ENCODE measurements at regions of chr19 and their contacts with region 1.

Region 1: GRCh38 chr19:55146078-55146704 is 2.8 kb downstream of the TNNT1 start:
- DNase-seq: no peak
- H3K4me3 ChIP-seq: no peak overlapping the region
- H3K27ac ChIP-seq: no peak overlapping the region
- H3K27me3 ChIP-seq: peaks cover 0 to 90% (median 65%) of the 10 kb centered on the region in 45 donors
- CTCF ChIP-seq: no peak

Region 2: DNA sequence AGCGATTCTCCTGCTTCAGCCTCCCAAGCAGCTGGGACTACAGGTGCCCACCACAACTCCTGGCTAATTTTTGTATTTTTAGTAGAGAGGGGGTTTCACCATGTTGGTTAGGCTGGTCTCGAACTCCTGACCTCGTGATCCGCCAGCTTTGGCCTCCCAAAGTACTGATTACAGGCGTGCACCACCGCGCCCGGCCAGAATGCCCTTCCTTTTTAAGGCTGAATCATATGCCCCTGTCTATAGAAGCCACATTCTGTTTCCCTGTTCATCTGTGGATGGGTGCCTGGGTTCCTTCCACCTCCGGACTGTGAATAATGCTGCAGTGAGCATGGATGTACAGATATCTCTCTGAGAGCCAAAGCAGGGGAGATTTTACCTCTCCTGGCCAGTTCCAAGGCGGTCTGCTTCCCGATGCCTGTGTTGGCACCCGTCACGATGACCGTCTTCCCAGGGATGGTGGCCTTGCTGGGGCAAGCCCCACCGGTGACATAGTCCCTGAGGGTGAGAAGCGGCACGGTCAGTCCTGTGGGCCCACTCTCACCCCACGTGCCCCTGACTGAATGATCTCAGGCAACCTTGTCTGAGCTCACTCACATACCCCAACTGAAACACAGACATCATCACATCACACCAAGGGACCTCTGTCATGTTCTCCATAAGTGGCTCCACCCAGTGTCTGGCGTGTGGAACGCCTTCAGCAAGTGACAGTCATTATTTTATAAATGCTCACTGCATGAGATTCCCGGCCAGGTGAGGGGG is 87.2 kb before region 1 on chr19:
- intact Hi-C with region 1: no loop called
- DNase-seq: no peak
- H3K4me3 ChIP-seq: no peak overlapping the region
- H3K27ac ChIP-seq: no peak overlapping the region
- H3K27me3 ChIP-seq: no peaks in the 10 kb centered on the region
- CTCF ChIP-seq: no peak

Region 3: DNA sequence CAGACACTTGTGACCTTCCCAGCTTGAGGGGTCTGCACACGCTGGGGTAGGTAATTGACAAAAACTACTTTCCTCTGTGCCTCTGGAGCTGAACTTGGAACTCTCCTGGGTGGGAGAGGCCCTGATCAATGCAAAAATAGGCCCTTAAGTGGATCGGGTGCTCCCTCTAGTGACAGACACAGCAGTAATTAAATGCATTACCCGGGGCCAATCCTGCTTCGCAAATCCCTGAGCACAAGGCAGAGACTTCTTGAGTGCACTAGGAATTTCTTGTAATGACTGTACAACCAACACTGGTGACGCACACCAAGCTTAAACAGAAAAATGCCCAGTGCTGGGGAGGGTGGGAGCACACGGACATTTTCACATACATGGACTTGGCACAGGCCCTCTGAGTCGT is 272.0 kb after region 1 on chr19:
- intact Hi-C with region 1: loop called (anchors 5 to 10 kb)
- DNase-seq: peak in 7 of 10 donors; percentile 29 to 73 (median 58)
- H3K4me3 ChIP-seq: no peak overlapping the region
- H3K27ac ChIP-seq: peak overlapping the region in 37 of 59 donors; percentile 1 to 100 (median 85)
- H3K27me3 ChIP-seq: peaks cover 0 to 3% (median 0%) of the 10 kb centered on the region in 45 donors
- CTCF ChIP-seq: peak; percentile 32 to 87 (median 73)

Region 4: DNA sequence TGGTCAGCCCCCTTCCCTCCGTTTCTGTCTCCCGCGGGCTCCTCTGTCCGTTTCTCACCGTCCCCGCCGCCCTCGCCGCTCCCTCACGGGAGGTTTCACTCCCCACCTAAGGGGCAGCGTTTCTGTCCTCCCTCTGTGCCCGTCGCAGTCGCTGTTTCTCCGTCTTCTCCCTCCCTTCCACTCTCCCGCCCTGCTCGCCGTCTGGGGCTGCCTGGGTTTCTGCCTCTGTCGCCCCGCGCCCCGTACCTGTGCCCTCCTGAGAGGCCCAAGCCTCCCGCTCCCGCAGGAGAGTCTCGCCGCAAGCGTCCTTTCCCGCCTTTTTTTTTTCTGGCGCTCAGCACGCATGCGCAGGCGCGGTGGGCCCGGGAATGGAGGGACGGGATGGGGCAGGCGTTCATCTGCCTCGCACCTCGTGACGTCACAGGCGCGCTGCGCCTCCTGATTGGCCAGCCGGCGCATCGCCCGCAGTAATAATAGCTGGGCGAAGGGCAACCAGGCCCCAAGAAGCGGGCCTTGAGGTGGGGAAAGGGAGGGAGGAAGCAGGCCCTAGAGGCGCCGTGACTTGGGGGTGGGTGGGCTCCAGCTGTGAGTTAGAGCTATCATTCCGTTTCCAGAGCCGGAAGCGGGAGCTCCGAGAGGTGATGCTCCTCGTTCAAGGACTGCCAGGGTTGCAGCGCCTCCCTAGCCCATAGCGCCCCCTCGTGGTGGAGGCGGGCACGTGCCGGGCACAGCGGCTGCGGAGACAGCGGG is 357.5 kb after region 1 on chr19:
- intact Hi-C with region 1: loop called (anchors 2 kb)
- DNase-seq: peak; percentile 91 to 97 (median 95)
- H3K4me3 ChIP-seq: peak overlapping the region; percentile 35 to 88 (median 61)
- H3K27ac ChIP-seq: peak overlapping the region in 50 of 59 donors; percentile 17 to 91 (median 80)
- H3K27me3 ChIP-seq: no peaks in the 10 kb centered on the region
- CTCF ChIP-seq: peak; percentile 95 to 100 (median 99)

Region 5: DNA sequence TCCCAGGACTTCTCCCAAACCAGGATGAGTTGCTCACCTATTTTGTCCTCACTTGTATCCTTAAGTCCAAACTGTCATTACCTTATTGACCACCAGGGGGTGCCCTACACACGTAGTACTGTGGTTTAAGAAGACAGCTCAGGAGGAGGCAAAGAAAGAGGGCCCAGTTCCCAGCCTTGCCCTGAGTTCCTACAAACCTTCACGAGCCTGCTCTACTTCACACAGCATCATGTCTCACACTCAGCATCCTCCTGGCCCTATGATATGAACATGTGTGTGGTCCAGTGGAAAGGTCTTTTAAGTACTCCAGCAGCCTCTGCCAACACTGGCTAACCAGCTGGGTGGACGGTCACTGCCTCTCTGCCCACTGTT is 486.3 kb after region 1 on chr19:
- intact Hi-C with region 1: loop called in 1 of 2 experiments (anchors 10 kb)
- DNase-seq: peak in 8 of 10 donors; percentile 58 to 98 (median 82)
- H3K4me3 ChIP-seq: peak overlapping the region in 1 of 59 donors; percentile 26
- H3K27ac ChIP-seq: peak overlapping the region in 42 of 59 donors; percentile 2 to 80 (median 54)
- H3K27me3 ChIP-seq: no peaks in the 10 kb centered on the region
- CTCF ChIP-seq: peak; percentile 81 to 98 (median 89)

Measured in dorsolateral prefrontal cortex (tissue), 120 donors.